T-cell (primary cell): ENCODE measurements at regions of chr12 and their contacts with region 1.

Region 1: GRCh38 chr12:112354399-112354798 is 27.8 kb downstream of the HECTD4 start:
- DNase-seq: no peak
- ATAC-seq: no peak
- H3K4me3 ChIP-seq: no peak overlapping the region
- H3K4me3 Mint-ChIP-seq: no peak overlapping the region
- H3K27ac ChIP-seq: no peak overlapping the region
- H3K27ac Mint-ChIP-seq: no peak overlapping the region
- H3K4me1 ChIP-seq: peaks cover 2 to 9% of the 10 kb centered on the region in 2 experiments
- H3K4me1 Mint-ChIP-seq: peaks cover 39 to 43% (median 40%) of the 10 kb centered on the region in 3 donors
- H3K27me3 ChIP-seq: no peaks in the 10 kb centered on the region
- H3K27me3 Mint-ChIP-seq: no peaks in the 10 kb centered on the region

Region 2: GRCh38 chr12:112148031-112148513 is 206.3 kb before region 1 on chr12:
- CTCF ChIA-PET with region 1: no interaction called
- POLR2A ChIA-PET with region 1: no interaction called
- DNase-seq: peak in 1 of 35 experiments; percentile 3
- ATAC-seq: no peak
- H3K4me3 ChIP-seq: no peak overlapping the region
- H3K4me3 Mint-ChIP-seq: no peak overlapping the region
- H3K27ac ChIP-seq: no peak overlapping the region
- H3K27ac Mint-ChIP-seq: no peak overlapping the region
- H3K4me1 ChIP-seq: no peaks in the 10 kb centered on the region
- H3K4me1 Mint-ChIP-seq: peaks cover 0 to 7% (median 2%) of the 10 kb centered on the region in 3 donors
- H3K27me3 ChIP-seq: no peaks in the 10 kb centered on the region
- H3K27me3 Mint-ChIP-seq: no peaks in the 10 kb centered on the region

Region 3: DNA sequence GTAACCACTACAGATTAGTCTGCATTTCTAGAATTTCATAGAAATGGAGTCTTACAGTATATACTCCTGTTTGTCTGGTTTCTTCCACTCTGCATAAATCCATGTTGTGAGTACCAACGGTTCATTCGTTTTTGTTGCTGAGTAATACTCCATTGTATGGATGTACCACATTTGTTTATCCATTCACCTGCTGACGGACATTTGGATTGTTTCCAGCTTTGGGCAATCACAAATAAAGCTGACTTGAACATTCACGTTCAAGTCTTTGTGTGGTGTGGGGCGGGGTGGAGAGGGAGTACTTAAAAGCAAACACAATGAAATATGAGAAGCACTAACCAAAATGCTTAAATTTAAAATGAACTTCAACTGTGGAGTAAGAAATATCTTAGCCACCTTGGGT is 20.7 kb after region 1 on chr12:
- CTCF ChIA-PET with region 1: interaction called in 1 of 2 experiments, 11 read pairs
- POLR2A ChIA-PET with region 1: no interaction called
- DNase-seq: no peak
- ATAC-seq: no peak
- H3K4me3 ChIP-seq: no peak overlapping the region
- H3K4me3 Mint-ChIP-seq: no peak overlapping the region
- H3K27ac ChIP-seq: no peak overlapping the region
- H3K27ac Mint-ChIP-seq: no peak overlapping the region
- H3K4me1 ChIP-seq: no peaks in the 10 kb centered on the region
- H3K4me1 Mint-ChIP-seq: peaks cover 23 to 35% (median 29%) of the 10 kb centered on the region in 3 donors
- H3K27me3 ChIP-seq: no peaks in the 10 kb centered on the region
- H3K27me3 Mint-ChIP-seq: no peaks in the 10 kb centered on the region

Region 4: GRCh38 chr12:112393328-112393727 is 38.9 kb after region 1 on chr12:
- CTCF ChIA-PET with region 1: no interaction called
- POLR2A ChIA-PET with region 1: no interaction called
- DNase-seq: no peak
- ATAC-seq: no peak
- H3K4me3 ChIP-seq: no peak overlapping the region
- H3K4me3 Mint-ChIP-seq: no peak overlapping the region
- H3K27ac ChIP-seq: no peak overlapping the region
- H3K27ac Mint-ChIP-seq: no peak overlapping the region
- H3K4me1 ChIP-seq: no peaks in the 10 kb centered on the region
- H3K4me1 Mint-ChIP-seq: no peaks in the 10 kb centered on the region
- H3K27me3 ChIP-seq: no peaks in the 10 kb centered on the region
- H3K27me3 Mint-ChIP-seq: no peaks in the 10 kb centered on the region

Region 5: GRCh38 chr12:112686373-112686772 is 332.0 kb after region 1 on chr12:
- CTCF ChIA-PET with region 1: no interaction called
- POLR2A ChIA-PET with region 1: no interaction called
- DNase-seq: no peak
- ATAC-seq: no peak
- H3K4me3 ChIP-seq: no peak overlapping the region
- H3K4me3 Mint-ChIP-seq: no peak overlapping the region
- H3K27ac ChIP-seq: no peak overlapping the region
- H3K27ac Mint-ChIP-seq: no peak overlapping the region
- H3K4me1 ChIP-seq: no peaks in the 10 kb centered on the region
- H3K4me1 Mint-ChIP-seq: no peaks in the 10 kb centered on the region
- H3K27me3 ChIP-seq: peaks cover 0 to 3% of the 10 kb centered on the region in 2 experiments
- H3K27me3 Mint-ChIP-seq: peaks cover 36 to 37% of the 10 kb centered on the region in 2 donors